ENCODE measurements at regions of chr14 and their contacts with region 1.

Region 1: DNA sequence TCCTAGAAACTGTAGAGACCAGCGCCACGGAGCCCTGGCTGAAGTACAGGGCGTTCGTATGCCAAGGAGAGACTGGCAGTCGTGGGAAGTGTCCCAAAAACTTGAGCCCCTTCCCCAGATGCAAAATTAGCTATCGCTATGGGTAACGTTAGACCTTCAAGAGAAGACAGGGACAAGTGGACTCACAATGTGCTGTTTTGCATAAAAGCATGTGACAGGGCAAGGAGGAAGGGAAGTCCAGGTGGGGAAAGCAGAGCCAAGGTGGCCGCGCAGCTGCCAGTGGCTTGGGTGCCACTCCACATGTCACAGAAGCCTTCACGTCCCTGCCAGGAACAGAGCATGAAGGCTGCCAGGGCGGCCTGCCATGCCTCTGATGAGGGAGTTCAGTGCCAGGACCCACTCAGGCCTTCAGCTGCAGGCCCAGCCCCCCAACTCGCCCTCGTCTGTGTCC is 61.2 kb upstream of the DYNC1H1 start:
- DNase-seq: peak; percentile 52

Region 2: GRCh38 chr14:101628471-101628966 is 274.6 kb before region 1 on chr14:
- in situ Hi-C with region 1: no loop called
- DNase-seq: peak; percentile 81

Region 3: DNA sequence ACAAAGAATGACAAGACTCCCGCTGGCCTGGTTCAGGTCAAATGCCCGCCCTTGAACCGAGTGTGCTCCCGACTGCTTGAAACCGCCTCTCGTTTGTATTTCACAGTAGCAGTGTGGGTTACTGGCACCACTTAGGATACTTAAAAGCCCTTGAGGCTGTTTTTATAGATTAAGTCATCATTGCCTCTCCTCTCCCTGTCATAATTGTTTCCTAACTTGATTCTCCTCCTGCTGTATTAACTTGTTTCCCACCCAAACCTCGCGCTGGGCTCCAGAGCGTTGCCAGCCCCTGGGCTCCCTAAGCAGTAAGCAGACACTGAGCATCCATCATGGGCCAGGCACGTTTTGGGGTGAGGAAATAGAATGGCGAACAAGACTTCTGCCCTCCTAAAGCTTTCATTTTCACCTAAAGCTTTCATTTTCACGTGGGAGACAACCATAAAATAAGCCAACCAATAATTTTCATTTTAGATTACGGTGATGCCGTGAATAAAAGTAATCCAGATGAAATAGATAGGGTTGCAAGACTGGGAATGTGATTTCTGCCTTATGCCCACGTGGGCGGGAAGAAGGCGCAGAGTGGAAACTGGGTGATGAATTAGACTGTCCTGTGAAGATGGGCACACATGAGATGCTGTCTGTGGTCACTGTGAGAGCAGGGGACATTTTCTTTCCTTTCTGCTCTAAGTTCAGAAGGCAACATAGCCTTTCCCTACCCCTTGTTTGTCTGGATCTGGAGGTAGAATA is 44.2 kb before region 1 on chr14:
- in situ Hi-C with region 1: loop called (anchors 5 kb)
- DNase-seq: no peak

Region 4: GRCh38 chr14:101992708-101993107 is 89.6 kb after region 1 on chr14:
- in situ Hi-C with region 1: no loop called
- DNase-seq: no peak

Measured in G401 (cell line).